Calu3 (cell line): ENCODE measurements at regions of chr17 and their contacts with region 1.

Region 1: DNA sequence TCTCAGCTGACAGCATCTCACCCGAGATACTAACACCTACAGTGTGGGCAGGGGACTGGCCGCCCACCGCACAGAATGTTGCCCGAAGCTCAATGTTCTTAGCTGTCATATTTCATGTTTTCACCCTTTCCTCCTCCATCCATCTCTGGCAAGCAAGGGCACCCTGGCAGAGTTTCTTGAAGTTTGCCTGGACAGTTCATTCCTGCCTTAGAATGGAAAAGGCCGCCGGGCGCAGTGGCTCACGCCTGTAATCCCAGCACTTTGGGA is 37.6 kb upstream of the TEX2 start:
- DNase-seq: no peak
- H3K4me3 Mint-ChIP-seq: no peak overlapping the region
- H3K27ac Mint-ChIP-seq: no peak overlapping the region
- H3K4me1 Mint-ChIP-seq: no peaks in the 10 kb centered on the region
- H3K27me3 Mint-ChIP-seq: no peaks in the 10 kb centered on the region
- CTCF ChIP-seq: no peak

Region 2: DNA sequence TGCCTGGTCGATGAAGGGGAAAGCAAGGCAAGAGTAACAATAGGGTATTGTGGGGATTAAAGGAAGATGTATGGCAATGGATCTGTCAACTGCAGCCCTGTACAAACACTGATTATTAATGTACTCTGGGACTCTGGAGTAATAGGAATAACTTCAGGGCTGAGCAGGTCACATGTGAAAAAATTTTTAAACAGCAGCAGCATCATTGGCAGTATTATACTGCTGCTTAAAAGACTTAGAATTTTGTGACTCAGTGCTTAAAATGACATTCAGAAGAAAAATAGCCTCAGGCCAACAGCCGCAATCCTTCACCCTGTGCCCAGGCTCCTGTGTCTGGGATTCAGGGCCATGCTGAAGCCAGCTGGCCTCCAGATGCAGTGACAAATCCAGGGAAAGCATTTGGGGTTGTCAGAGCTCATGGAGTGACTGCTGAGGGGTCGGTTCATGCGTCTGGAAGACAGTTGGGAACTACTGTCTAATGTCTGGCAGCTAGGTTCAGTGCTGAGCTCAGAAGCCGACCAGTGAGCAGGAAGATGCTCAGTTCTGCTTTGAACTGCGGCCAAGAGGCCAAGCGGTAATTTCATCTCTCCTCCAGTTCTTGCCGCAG is 59.8 kb before region 1 on chr17:
- CTCF ChIA-PET with region 1: no interaction called
- intact Hi-C with region 1: no loop called
- DNase-seq: no peak
- H3K4me3 Mint-ChIP-seq: no peak overlapping the region
- H3K27ac Mint-ChIP-seq: peak overlapping the region; percentile 4
- H3K4me1 Mint-ChIP-seq: peaks cover 26% of the 10 kb centered on the region
- H3K27me3 Mint-ChIP-seq: no peaks in the 10 kb centered on the region
- CTCF ChIP-seq: no peak

Region 3: DNA sequence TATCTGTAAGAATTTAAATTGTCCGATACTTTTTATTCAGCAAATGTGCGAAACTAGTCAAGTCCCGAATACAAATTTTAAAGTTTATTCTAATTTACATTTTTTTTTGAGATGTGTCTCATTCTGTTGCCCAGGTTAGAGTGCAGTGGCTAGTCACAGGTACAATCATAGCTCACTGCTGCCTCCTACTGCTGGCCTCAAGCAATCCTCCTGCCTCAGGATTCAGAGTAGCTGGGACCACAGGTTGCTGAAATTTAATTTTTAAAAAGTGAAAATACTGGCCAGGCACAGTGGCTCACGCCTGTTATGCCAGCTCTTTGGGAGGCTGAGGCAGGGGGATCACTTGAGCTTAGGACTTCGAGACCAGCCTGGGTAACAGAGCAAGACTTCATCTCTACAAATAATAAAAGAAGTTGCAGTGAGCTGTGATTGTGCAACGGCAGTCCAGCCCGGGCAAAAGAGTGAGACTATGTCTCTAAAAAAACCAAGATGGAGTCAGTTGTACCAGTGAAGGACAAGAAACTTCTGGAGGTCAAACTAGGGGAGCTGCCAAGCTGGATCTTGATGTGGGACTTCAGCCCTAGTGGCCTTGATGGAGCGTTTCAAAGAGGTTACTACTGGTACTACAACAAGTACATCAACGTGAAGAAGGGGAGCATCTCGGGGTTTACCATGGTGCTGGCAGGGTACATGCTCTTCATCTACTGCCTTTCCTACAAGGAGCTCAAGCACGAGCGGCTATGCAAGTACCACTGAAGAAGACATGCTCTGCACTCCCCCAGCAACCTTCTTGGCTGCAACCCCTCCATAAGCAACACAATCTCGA is 190.6 kb after region 1 on chr17:
- CTCF ChIA-PET with region 1: no interaction called
- intact Hi-C with region 1: loop called (anchors 5 kb)
- DNase-seq: peak; percentile 52
- H3K4me3 Mint-ChIP-seq: no peak overlapping the region
- H3K27ac Mint-ChIP-seq: no peak overlapping the region
- H3K4me1 Mint-ChIP-seq: peaks cover 8% of the 10 kb centered on the region
- H3K27me3 Mint-ChIP-seq: no peaks in the 10 kb centered on the region
- CTCF ChIP-seq: peak; percentile 34